Mammary epithelial cell (primary cell): ENCODE measurements at regions of chr21 and their contacts with region 1.

Region 1: GRCh38 chr21:33542640-33543504 is at the start of gene SON:
- DNase-seq: peak; percentile 99
- H3K4me3 ChIP-seq: peak within 1 kb of the TSS; percentile 78 to 87 (median 81)
- H3K27ac ChIP-seq: peak within 1 kb of the TSS; percentile 100
- H3K4me1 ChIP-seq: peaks cover 13% of the 10 kb centered on the region
- H3K27me3 ChIP-seq: no peaks in the 10 kb centered on the region
- CTCF ChIP-seq: no peak
- total RNA-seq, gene SON: 132 to 233 TPM

Region 2: GRCh38 chr21:33496345-33496744 is 46.5 kb before region 1 on chr21:
- CTCF ChIA-PET with region 1: no interaction called
- dilution Hi-C with region 1: loop called (anchors 5 kb)
- in situ Hi-C with region 1: no loop called
- intact Hi-C with region 1: no loop called
- DNase-seq: no peak
- H3K4me3 ChIP-seq: no peak overlapping the region
- H3K27ac ChIP-seq: no peak overlapping the region
- H3K4me1 ChIP-seq: no peaks in the 10 kb centered on the region
- H3K27me3 ChIP-seq: no peaks in the 10 kb centered on the region
- CTCF ChIP-seq: no peak

Region 3: GRCh38 chr21:33588485-33589335 is 45.8 kb after region 1 on chr21 and contains the start of gene DONSON:
- CTCF ChIA-PET with region 1: no interaction called
- dilution Hi-C with region 1: no loop called
- in situ Hi-C with region 1: no loop called
- intact Hi-C with region 1: loop called (anchors 1 kb)
- DNase-seq: peak; percentile 77
- H3K4me3 ChIP-seq: peak within 1 kb of the TSS; percentile 38 to 98 (median 64)
- H3K27ac ChIP-seq: peak within 1 kb of the TSS; percentile 78
- H3K4me1 ChIP-seq: peaks cover 6% of the 10 kb centered on the region
- H3K27me3 ChIP-seq: no peaks in the 10 kb centered on the region
- CTCF ChIP-seq: no peak
- total RNA-seq, gene DONSON: 8.0 to 22.9 TPM